GM10248 (cell line): ENCODE measurements at regions of chr1 and their contacts with region 1.

Region 1: GRCh38 chr1:200139661-200140250 is 112.2 kb downstream of the NR5A2 start:
- DNase-seq: peak; percentile 58
- CTCF ChIP-seq: peak; percentile 56

Region 2: GRCh38 chr1:200081151-200081968 is 58.4 kb before region 1 on chr1:
- CTCF ChIA-PET with region 1: no interaction called
- POLR2A ChIA-PET with region 1: no interaction called
- DNase-seq: no peak
- CTCF ChIP-seq: no peak

Region 3: GRCh38 chr1:200128944-200129885 is 10.5 kb before region 1 on chr1:
- CTCF ChIA-PET with region 1: interaction called, 12 read pairs
- POLR2A ChIA-PET with region 1: no interaction called
- DNase-seq: no peak
- CTCF ChIP-seq: no peak

Region 4: GRCh38 chr1:200150720-200151119 is 11.0 kb after region 1 on chr1:
- CTCF ChIA-PET with region 1: interaction called, 11 read pairs
- POLR2A ChIA-PET with region 1: no interaction called
- DNase-seq: peak; percentile 34
- CTCF ChIP-seq: no peak

Region 5: DNA sequence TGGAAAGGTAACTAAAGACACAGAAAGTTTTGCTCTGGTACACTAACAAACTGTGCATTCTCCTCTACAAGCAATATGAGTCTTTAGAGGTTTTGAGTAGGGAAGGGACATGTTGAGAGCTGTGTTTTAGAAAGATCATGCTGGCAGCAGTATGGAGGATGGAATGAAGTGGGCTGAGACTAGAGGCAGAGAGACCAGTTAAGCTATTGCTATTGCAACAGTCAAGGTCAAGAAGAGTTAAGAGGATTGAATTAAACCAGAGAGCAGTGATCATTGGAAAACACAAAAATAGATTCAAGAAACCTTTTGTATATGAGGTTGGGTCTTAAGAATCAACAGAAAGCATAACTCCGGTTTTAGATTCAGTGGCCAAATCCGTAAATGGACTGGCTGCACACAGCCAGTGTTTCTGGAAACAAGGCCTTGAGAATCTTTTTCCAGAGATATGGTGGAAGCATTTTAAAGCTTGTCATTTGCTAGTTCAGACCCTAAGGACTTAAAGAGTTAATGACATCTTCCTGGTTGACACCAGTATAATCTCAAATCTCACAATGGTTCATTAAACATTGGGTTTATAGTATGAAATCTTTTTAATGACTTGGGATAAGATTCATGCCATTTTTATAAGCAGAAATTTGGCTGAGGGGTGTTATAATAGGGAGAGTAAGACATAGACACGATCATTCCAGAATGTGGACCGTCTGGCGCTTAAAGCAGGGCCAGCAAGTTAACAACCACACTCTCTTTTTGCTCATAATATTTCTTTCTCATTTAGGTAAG is 65.7 kb after region 1 on chr1:
- CTCF ChIA-PET with region 1: no interaction called
- POLR2A ChIA-PET with region 1: no interaction called
- DNase-seq: no peak
- CTCF ChIP-seq: no peak

Region 6: GRCh38 chr1:200231787-200232231 is 92.1 kb after region 1 on chr1:
- CTCF ChIA-PET with region 1: no interaction called
- POLR2A ChIA-PET with region 1: no interaction called
- DNase-seq: no peak
- CTCF ChIP-seq: no peak